HCT116 (cell line): ENCODE measurements at regions of chr1 and their contacts with region 1.

Region 1: DNA sequence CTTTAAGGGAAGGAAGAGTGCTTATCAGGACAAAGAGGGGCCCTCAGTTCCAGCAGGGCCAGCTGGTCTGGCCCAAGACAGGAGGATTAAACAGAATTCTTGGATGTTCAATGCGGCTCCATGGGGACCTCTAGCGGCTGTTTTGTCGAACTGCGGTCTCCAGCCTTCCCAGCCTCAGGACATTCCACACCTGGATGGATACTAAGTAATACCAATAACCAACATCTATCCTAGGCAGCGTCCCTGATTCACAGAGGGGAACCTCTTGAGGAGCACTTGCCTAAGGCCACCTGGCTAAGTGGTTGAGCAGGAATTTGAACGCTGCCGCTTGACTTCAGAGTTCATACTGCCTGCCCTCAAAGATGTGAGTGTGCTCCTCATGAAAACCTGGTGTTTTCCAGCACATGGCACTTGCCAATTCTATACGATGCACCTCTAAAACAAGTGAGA is 15.5 kb upstream of the CD247 start:
- DNase-seq: peak; percentile 48
- ATAC-seq: peak; percentile 92
- H3K4me3 ChIP-seq: no peak overlapping the region
- H3K27ac ChIP-seq: no peak overlapping the region
- H3K4me1 ChIP-seq: no peaks in the 10 kb centered on the region
- H3K27me3 ChIP-seq: no peaks in the 10 kb centered on the region; the same call in 1 of the 2 replicates
- CTCF ChIP-seq: peak; percentile 66 to 94 (median 88)
- POLR2A ChIP-seq: no peak
- RAD21 ChIP-seq: peak; percentile 86

Region 2: DNA sequence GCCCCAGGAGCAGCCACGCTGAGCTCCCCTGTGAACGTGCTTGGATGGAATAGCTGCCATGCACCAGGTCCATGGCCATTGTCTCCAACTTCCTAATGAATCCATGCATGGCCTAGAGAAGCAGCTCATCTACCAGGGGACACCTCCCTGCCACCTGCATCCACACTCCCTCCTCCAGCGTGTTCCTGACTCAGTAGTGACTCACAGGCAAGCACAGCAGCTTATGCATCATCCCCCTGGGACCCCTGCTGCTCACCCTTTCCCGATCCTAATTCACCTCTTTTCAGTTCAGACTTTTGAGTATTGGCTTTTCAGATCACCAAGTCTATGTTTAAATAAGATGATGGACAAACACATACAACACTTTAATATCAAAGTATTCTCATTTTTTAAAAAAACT is 617.9 kb before region 1 on chr1:
- CTCF ChIA-PET with region 1: no interaction called
- POLR2A ChIA-PET with region 1: no interaction called
- RAD21 ChIA-PET with region 1: no interaction called
- intact Hi-C with region 1: loop called (anchors 1 kb)
- DNase-seq: peak; percentile 59
- ATAC-seq: peak; percentile 90
- H3K4me3 ChIP-seq: no peak overlapping the region
- H3K27ac ChIP-seq: no peak overlapping the region
- H3K4me1 ChIP-seq: peaks cover 0 to 29% of the 10 kb centered on the region in 2 experiments; a peak in 2 of 4 replicates
- H3K27me3 ChIP-seq: no peaks in the 10 kb centered on the region
- CTCF ChIP-seq: no peak
- POLR2A ChIP-seq: no peak
- RAD21 ChIP-seq: no peak

Region 3: DNA sequence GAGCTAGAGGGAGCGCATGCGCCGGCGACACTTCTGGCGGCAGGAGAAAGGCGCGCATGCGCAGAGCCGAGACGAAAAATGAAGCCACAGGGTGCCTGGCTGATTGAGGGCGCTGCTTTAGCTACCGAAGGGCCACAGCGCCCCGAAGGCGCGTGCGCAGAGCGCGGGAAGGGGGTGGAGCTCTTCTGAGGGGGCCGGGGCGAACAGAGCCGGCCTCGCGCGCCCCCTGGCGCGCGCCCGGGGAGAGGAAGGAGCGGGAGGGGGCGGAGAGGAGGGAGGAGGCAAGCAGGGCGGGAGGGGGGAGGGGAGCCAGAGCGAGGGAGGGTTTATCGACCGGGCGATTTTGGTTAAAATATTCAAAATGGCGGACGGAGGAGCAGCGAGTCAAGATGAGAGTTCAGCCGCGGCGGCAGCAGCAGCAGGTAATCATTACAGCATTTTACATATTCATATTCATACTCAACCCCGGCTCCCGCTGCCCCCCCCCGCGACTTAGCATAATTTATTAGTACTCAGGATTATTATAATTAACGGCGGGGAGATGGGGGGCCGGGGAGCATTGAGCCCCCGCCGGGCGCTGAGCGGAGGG is 313.2 kb before region 1 on chr1 and contains the start of gene POU2F1:
- CTCF ChIA-PET with region 1: no interaction called
- POLR2A ChIA-PET with region 1: no interaction called
- RAD21 ChIA-PET with region 1: no interaction called
- intact Hi-C with region 1: loop called (anchors 5 kb)
- DNase-seq: peak; percentile 96
- ATAC-seq: peak; percentile 85
- H3K4me3 ChIP-seq: peak within 1 kb of the TSS; percentile 69 to 75
- H3K27ac ChIP-seq: peak within 1 kb of the TSS; percentile 95
- H3K4me1 ChIP-seq: peaks cover 14 to 39% of the 10 kb centered on the region in 2 experiments
- H3K27me3 ChIP-seq: no peaks in the 10 kb centered on the region
- CTCF ChIP-seq: peak; percentile 61 to 70 (median 66); a peak in 5 of 6 replicates
- POLR2A ChIP-seq: no peak
- RAD21 ChIP-seq: peak; percentile 64
- total RNA-seq, gene POU2F1: 24.5 TPM

Region 4: GRCh38 chr1:167268398-167268787 is 265.5 kb before region 1 on chr1:
- CTCF ChIA-PET with region 1: interaction called, 6 read pairs
- POLR2A ChIA-PET with region 1: interaction called, 4 read pairs
- RAD21 ChIA-PET with region 1: no interaction called
- intact Hi-C with region 1: loop called (anchors 2 kb)
- DNase-seq: no peak
- ATAC-seq: no peak
- H3K4me3 ChIP-seq: no peak overlapping the region
- H3K27ac ChIP-seq: no peak overlapping the region
- H3K4me1 ChIP-seq: peaks cover 8 to 21% of the 10 kb centered on the region in 2 experiments
- H3K27me3 ChIP-seq: no peaks in the 10 kb centered on the region
- CTCF ChIP-seq: no peak
- POLR2A ChIP-seq: no peak
- RAD21 ChIP-seq: no peak

Region 5: DNA sequence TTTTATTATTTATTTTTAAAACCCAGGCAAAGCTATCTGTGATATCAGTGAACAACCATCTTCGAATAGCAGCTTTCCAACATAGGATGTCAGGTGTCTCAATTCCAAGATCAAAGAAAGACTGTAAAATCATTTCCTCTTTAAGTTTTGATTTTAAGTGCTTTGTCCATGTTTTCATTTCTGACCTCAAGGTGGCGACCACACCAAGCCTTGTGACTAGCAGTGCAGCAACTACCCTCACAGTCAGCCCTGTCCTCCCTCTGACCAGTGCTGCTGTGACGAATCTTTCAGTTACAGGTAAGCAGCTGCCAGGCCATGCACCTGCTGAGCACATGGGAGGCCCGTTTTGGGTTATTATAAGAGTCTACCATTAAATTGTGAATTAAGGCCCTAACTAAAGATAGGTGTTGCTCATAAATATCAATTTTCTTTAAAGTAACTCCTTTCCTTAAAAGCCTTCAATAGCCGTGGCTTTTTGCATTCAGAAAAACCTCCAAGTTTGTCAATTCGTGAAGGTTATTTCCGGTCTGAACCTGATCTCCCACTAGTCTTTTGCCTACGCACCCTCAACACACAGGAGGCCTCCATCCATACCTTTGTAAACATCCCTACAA is 132.5 kb before region 1 on chr1:
- CTCF ChIA-PET with region 1: interaction called, 3 read pairs
- POLR2A ChIA-PET with region 1: no interaction called
- RAD21 ChIA-PET with region 1: no interaction called
- intact Hi-C with region 1: loop called (anchors 1 kb)
- DNase-seq: peak; percentile 36
- ATAC-seq: peak; percentile 99
- H3K4me3 ChIP-seq: no peak overlapping the region
- H3K27ac ChIP-seq: no peak overlapping the region
- H3K4me1 ChIP-seq: peaks cover 0 to 4% of the 10 kb centered on the region in 2 experiments; a peak in 1 of 4 replicates
- H3K27me3 ChIP-seq: no peaks in the 10 kb centered on the region
- CTCF ChIP-seq: peak; percentile 55 to 62 (median 56); a peak in 5 of 6 replicates
- POLR2A ChIP-seq: no peak
- RAD21 ChIP-seq: peak; percentile 77

Region 6: DNA sequence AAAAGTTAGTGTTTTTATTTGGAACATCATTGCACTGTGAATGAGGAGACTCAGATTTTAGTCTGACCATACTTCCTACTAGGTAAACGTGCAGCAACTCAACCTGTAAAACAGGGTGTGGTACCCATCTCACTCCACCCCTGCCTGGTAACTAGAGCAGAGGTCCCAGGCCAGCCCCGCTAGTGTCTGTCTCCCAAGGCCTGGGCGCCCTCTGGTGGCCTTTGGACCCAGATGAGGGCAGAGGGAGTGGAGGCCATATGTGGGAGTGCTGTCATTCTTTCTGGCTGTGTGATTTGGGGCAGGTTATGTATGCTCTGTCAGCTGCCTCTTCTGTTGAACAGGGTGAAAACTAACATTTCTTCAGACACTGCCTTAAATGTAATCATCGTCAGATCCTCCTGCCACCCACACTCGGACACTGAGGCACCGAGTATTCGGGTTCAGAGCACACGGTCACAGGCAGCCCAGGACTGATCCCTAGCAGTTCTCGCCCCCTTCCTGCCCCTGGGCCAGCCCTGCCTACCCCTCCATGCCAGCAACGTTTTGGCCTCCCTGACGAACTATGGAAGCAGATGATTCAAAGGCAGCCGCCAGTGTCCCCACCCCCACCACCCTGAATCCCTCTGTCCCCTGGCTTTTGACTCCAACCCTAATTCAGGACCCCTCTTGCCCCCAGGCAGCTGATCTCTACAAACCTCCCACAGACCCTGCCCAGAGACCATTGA is 91.6 kb before region 1 on chr1:
- CTCF ChIA-PET with region 1: no interaction called
- POLR2A ChIA-PET with region 1: no interaction called
- RAD21 ChIA-PET with region 1: no interaction called
- intact Hi-C with region 1: loop called (anchors 5 kb)
- DNase-seq: peak; percentile 77
- ATAC-seq: peak; percentile 99
- H3K4me3 ChIP-seq: no peak overlapping the region
- H3K27ac ChIP-seq: no peak overlapping the region
- H3K4me1 ChIP-seq: peaks cover 0 to 16% of the 10 kb centered on the region in 2 experiments; a peak in 3 of 4 replicates
- H3K27me3 ChIP-seq: no peaks in the 10 kb centered on the region
- CTCF ChIP-seq: peak; percentile 88 to 95 (median 93)
- POLR2A ChIP-seq: no peak
- RAD21 ChIP-seq: peak; percentile 99